Activated CD4-positive, alpha-beta T cell treated with anti-CD3 and anti-CD28 coated beads for 36 hours (primary cell): ENCODE measurements at regions of chr12 and their contacts with region 1.

Region 1: GRCh38 chr12:121499929-121500793 is 80.7 kb downstream of the KDM2B start:
- DNase-seq: peak; percentile 84
- ATAC-seq: peak; percentile 86
- H3K4me3 Mint-ChIP-seq: no peak overlapping the region
- H3K27ac Mint-ChIP-seq: no peak overlapping the region
- H3K4me1 Mint-ChIP-seq: peaks cover 13% of the 10 kb centered on the region
- H3K27me3 Mint-ChIP-seq: no peaks in the 10 kb centered on the region

Region 2: DNA sequence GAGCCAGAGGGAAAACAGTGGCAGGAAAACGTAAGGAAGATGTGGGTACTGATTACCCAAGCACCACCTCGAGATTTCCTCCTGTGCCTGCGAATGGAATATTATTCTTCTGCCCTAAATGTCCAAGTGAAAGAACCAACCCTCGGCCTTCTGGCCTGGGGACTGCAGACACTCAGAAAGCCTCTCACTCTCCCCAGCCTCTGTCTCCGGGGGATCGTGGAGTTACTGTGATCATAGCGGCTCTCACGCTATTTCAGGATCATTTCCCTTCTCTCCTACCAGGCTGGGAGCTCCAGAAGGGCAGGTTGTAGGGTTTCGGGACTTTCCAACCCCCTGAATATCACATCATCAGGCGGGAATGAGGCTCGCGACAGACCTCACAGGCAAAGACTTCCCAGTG is 11.8 kb after region 1 on chr12:
- CTCF ChIA-PET with region 1: interaction called, 25 read pairs
- POLR2A ChIA-PET with region 1: no interaction called
- intact Hi-C with region 1: no loop called
- DNase-seq: no peak
- ATAC-seq: no peak
- H3K4me3 Mint-ChIP-seq: no peak overlapping the region
- H3K27ac Mint-ChIP-seq: no peak overlapping the region
- H3K4me1 Mint-ChIP-seq: no peaks in the 10 kb centered on the region
- H3K27me3 Mint-ChIP-seq: no peaks in the 10 kb centered on the region

Region 3: GRCh38 chr12:121530600-121531355 is 30.6 kb after region 1 on chr12:
- CTCF ChIA-PET with region 1: interaction called, 4 read pairs
- POLR2A ChIA-PET with region 1: no interaction called
- intact Hi-C with region 1: loop called in 1 of 2 experiments (anchors 2 kb)
- DNase-seq: peak; percentile 81
- ATAC-seq: peak; percentile 69
- H3K4me3 Mint-ChIP-seq: no peak overlapping the region
- H3K27ac Mint-ChIP-seq: peak overlapping the region; percentile 88
- H3K4me1 Mint-ChIP-seq: peaks cover 41% of the 10 kb centered on the region
- H3K27me3 Mint-ChIP-seq: no peaks in the 10 kb centered on the region

Region 4: DNA sequence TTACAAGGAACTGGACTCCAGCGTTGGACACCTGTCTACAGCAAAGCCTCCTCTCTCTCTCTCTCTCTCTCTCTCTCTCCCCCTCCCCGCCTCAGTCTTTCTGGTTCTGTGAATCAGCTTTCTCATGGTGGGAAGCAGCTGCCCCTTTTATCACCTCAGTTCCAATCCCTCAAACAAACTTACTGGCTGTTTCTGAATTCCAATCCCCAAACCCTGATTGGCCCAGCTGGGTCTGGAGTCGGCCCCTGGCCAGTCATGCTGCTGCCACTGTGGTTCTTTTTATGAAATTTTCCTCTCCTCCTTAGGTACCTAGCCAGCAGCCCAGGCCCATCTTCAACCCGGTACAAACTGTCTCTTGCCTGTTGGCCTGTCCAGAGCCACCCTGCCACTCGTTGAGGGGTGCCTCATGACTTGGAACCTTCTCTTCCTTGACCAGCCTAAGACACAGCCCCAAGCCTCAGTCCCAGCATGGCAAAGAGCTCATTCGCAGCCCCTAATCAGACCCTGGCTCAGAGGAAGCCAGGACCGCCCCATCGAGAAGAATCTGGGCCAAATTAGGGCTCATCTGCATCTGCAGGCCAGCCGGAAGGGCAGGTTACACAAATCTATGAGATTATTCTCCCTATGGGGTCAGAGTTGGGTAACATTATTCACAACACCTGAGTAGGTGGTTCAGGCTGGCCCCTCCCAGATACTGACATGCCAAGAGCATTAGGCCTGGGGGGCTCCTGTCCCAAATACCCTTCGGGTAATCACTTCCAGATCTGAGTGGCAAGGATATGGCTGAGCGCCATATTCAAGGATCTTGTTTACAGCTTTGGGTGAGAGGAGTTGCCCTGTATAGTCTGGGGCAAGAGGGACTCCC is 178.8 kb after region 1 on chr12:
- CTCF ChIA-PET with region 1: interaction called, 13 read pairs
- POLR2A ChIA-PET with region 1: no interaction called
- intact Hi-C with region 1: loop called in 1 of 2 experiments (anchors 1 kb)
- DNase-seq: peak; percentile 32
- ATAC-seq: peak; percentile 21
- H3K4me3 Mint-ChIP-seq: no peak overlapping the region
- H3K27ac Mint-ChIP-seq: peak overlapping the region; percentile 23
- H3K4me1 Mint-ChIP-seq: peaks cover 7% of the 10 kb centered on the region
- H3K27me3 Mint-ChIP-seq: no peaks in the 10 kb centered on the region

Region 5: GRCh38 chr12:121773011-121773777 is 273.0 kb after region 1 on chr12:
- CTCF ChIA-PET with region 1: no interaction called
- POLR2A ChIA-PET with region 1: no interaction called
- intact Hi-C with region 1: loop called in 1 of 2 experiments (anchors 5 kb)
- DNase-seq: peak; percentile 90
- ATAC-seq: peak; percentile 83
- H3K4me3 Mint-ChIP-seq: no peak overlapping the region
- H3K27ac Mint-ChIP-seq: peak overlapping the region; percentile 81
- H3K4me1 Mint-ChIP-seq: peaks cover 11% of the 10 kb centered on the region
- H3K27me3 Mint-ChIP-seq: no peaks in the 10 kb centered on the region